Right cardiac atrium (tissue), 5 donors: ENCODE measurements at regions of chr12 and their contacts with region 1.

Region 1: DNA sequence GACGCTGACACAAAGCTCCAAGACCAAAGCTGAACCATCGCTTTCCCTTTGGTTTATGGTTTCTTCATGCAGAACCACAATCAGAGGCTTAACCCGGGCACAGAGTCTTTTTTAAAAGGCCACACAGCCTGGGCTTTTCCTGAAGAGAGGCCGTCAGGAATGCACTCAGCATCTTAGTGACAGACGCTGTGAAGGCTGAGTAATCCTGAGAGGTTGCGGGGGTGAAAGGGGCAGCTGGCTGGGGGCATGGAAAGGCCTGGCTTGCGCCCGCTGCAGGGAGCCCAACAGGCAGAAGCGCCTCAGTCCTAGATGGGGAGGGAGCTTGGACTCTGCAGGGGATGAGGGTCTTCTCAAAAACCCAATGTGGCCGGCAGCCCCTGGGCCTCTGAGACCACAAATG is 13.6 kb downstream of the CTDSP2 start:
- DNase-seq: no peak
- ATAC-seq: no peak
- H3K4me3 ChIP-seq: no peak overlapping the region
- H3K27ac ChIP-seq: peak overlapping the region; percentile 39
- H3K4me1 ChIP-seq: peaks cover 60% of the 10 kb centered on the region
- H3K27me3 ChIP-seq: no peaks in the 10 kb centered on the region

Region 2: GRCh38 chr12:57899010-57899662 is 66.2 kb after region 1 on chr12:
- intact Hi-C with region 1: loop called in 3 of 4 experiments (anchors 2 to 5 kb)
- DNase-seq: peak; percentile 51 to 69 (median 66)
- ATAC-seq: peak in 1 of 2 donors; percentile 21
- H3K4me3 ChIP-seq: no peak overlapping the region
- H3K27ac ChIP-seq: peak overlapping the region; percentile 71
- H3K4me1 ChIP-seq: peaks cover 26% of the 10 kb centered on the region
- H3K27me3 ChIP-seq: no peaks in the 10 kb centered on the region

Region 3: DNA sequence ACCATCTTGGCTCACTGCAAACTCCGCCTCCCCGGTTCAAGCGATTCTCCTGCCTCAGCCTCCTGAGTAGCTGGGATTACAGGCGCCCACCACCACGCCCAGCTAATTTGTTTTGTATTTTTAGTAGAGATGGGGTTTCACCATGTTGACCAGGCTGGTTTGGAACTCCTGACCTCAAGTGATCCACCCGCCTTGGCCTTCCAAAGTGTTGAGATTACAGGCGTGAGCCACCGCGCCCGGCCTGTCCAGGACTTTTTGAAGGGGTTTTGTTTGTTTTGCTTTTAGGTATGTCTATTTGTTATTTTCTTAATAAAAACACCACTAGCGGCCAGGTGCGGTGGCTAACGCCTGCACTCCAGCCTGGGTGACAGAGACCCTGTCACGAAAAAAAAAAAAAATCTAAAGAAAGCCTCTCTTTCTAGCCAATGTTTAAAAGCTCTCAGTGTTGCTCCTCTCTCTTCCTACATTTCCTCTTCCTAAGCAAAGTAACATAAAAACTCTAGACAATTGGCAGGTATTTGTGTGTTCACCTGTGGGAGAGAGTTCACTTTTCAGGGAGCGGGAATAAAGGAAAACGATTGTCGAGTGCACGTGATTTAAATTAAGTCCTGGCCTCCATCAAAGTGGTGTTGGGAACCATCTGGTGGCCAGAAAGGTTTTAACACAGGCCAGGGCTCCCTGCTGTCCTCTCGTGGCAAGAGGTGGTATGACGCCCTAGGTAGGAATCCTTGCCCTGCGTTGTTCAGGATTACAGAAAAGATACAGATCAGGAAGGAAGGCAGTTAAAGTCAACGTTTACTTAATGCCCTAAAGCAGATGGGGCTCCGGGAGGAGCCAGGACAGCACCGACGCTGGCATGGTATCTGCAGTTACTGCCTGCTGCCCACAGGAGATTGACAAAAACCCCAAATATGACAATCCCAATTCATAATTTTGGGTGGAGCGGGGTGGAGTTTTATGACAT is 72.2 kb after region 1 on chr12:
- intact Hi-C with region 1: loop called in 3 of 4 experiments (anchors 2 to 5 kb)
- DNase-seq: peak; percentile 78 to 91 (median 90)
- ATAC-seq: peak; percentile 91 to 92
- H3K4me3 ChIP-seq: peak overlapping the region; percentile 9
- H3K27ac ChIP-seq: no peak overlapping the region
- H3K4me1 ChIP-seq: no peaks in the 10 kb centered on the region
- H3K27me3 ChIP-seq: no peaks in the 10 kb centered on the region

Region 4: GRCh38 chr12:57935839-57936512 is 103.0 kb after region 1 on chr12:
- intact Hi-C with region 1: no loop called
- DNase-seq: peak; percentile 91 to 95 (median 92)
- ATAC-seq: peak; percentile 95 to 96
- H3K4me3 ChIP-seq: peak overlapping the region; percentile 95
- H3K27ac ChIP-seq: peak overlapping the region; percentile 71
- H3K4me1 ChIP-seq: no peaks in the 10 kb centered on the region
- H3K27me3 ChIP-seq: no peaks in the 10 kb centered on the region